ENCODE measurements at regions of chr13 and their contacts with region 1.

Region 1: DNA sequence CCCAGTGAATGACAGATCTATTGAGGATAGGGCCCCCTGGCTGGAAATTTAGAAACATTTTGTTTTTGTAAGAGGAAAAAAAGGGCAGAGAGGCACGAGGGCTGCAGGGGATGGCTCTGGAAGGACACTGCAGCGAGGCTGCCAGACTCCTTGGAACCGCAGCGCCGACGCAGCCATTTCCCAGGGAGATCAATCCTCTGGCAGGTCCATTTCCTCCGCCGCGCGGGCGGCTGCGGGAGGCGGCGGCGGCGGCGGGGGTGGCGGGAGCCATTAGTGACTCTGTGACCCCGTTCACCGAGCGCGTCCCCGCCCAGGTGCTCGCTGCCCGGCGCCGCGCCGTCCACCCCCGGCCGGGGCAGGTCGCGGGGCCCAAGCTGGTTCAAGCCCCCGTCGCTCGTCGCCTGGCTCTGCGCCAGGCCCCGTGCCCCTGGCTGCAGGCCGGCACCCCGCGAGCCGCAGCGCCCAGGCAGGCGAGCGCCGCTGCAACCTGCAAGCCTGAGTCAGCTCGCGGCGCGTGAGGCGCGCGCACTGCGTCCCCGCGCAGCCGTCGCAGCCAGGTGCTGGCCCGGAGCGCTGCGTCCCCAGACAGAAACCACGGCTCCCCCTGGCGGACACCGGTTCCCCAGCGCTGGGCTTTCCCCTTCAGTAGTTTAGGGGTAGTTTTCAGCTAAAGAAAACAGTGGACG is 192.6 kb downstream of the KATNAL1 start:
- DNase-seq: peak; percentile 17
- ATAC-seq: peak; percentile 94
- H3K4me3 ChIP-seq: peak overlapping the region; percentile 41 to 57
- H3K27ac ChIP-seq: no peak overlapping the region
- H3K4me1 ChIP-seq: peaks cover 3% of the 10 kb centered on the region
- H3K27me3 ChIP-seq: no peaks in the 10 kb centered on the region
- CTCF ChIP-seq: peak; percentile 91

Region 2: GRCh38 chr13:29771247-29771646 is 343.5 kb before region 1 on chr13:
- CTCF ChIA-PET with region 1: interaction called, 33 read pairs
- POLR2A ChIA-PET with region 1: no interaction called
- in situ Hi-C with region 1: no loop called
- intact Hi-C with region 1: loop called (anchors 2 kb)
- DNase-seq: no peak
- ATAC-seq: no peak
- H3K4me3 ChIP-seq: no peak overlapping the region
- H3K27ac ChIP-seq: no peak overlapping the region
- H3K4me1 ChIP-seq: no peaks in the 10 kb centered on the region
- H3K27me3 ChIP-seq: no peaks in the 10 kb centered on the region
- CTCF ChIP-seq: peak; percentile 24; the same call in 1 of the 2 replicates